PC-3 (cell line): ENCODE measurements at regions of chr14 and their contacts with region 1.

Region 1: GRCh38 chr14:37197421-37198272 is at the start of gene MIPOL1:
- DNase-seq: peak; percentile 93
- ATAC-seq: peak; percentile 72
- H3K4me3 ChIP-seq: peak within 1 kb of the TSS; percentile 83
- H3K27ac ChIP-seq: peak within 1 kb of the TSS; percentile 81
- H3K4me1 ChIP-seq: peaks cover 68% of the 10 kb centered on the region
- H3K27me3 ChIP-seq: no peaks in the 10 kb centered on the region
- CTCF ChIP-seq: peak; percentile 67
- total RNA-seq, gene MIPOL1: 14.2 and 22.5 TPM in 2 replicates

Region 2: DNA sequence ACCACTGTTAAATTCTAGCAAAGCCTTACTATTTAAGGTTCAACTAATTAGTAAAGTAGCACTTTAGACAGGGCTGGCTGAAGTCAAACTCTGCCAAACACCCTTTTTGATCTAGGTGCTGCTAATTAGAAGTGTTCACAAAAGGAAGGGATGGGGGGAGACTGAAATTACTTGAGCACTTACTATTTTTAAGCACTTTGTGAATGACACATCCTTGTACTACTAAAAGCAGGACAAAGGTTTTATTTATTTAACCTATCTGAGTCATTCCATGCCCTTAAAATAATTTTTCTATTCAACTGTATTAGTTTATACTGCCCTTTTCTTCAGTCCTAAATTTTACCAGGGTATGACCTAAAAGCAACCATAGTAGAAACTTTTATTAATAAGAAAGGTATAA is 897.3 kb before region 1 on chr14:
- CTCF ChIA-PET with region 1: no interaction called
- POLR2A ChIA-PET with region 1: no interaction called
- intact Hi-C with region 1: loop called (anchors 5 kb)
- DNase-seq: peak; percentile 46
- ATAC-seq: peak; percentile 87
- H3K4me3 ChIP-seq: no peak overlapping the region
- H3K27ac ChIP-seq: no peak overlapping the region
- H3K4me1 ChIP-seq: peaks cover 17% of the 10 kb centered on the region
- H3K27me3 ChIP-seq: no peaks in the 10 kb centered on the region
- CTCF ChIP-seq: no peak

Region 3: DNA sequence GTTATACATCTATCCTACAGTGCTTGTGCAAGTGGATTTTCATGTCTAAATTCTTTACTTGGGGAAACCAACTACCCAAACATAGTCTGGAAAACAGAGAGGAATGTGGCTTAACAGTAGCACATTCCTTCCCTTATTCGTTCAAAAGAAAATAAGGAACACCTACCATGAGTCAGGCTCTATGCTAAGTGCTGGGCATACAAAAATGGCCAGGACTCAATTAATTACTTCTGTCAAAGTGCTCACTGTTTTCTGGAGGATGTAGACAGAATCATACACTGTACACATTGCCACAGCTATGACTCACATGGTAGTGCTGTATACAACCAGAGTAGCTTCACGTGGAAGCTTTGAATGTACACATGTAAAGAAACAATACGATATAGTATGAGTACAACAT is 75.4 kb before region 1 on chr14:
- CTCF ChIA-PET with region 1: no interaction called
- POLR2A ChIA-PET with region 1: no interaction called
- intact Hi-C with region 1: loop called (anchors 2 kb)
- DNase-seq: peak; percentile 94
- ATAC-seq: peak; percentile 93
- H3K4me3 ChIP-seq: no peak overlapping the region
- H3K27ac ChIP-seq: peak overlapping the region; percentile 32
- H3K4me1 ChIP-seq: peaks cover 38% of the 10 kb centered on the region
- H3K27me3 ChIP-seq: no peaks in the 10 kb centered on the region
- CTCF ChIP-seq: no peak

Region 4: DNA sequence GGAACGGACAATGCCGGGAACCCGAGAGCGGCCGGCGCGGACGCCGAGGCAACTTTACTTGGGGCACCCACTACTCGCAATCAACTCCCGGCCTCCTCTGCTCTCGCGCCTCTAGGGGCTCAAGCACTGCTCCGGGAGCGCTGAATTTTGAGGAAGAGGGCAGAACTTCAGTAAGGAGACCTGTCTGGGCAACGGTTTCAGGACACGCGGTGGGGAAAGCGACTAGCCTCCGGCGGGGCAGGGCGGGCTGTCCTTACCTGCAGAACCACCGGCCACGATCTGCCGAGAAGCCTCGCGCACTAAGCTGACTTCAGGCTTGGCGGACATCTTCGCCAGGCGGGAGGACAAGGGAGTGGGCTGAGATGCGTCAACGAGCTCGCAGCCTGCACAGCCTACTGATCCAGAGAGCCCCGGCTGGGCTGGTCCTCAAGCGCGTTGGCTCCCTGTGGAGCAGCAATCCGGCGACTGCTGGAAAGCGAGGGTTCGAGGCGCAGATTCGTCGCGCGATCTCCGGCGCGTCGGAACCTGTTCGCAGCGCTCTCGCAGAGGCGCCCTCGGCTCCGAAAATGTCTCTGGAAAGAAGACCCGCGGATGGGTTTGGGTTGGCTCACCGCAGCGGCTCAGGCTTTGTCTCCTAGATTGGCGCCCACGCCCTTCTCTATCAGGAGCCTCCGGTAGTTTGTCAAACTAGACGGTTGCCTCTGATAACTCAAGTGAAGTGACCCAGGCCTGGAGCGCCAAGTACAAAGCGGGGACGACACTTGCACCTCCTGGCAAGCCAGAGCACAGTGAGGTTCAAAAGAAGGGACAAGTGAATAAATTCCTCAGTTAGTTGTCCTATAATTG is 25.4 kb before region 1 on chr14 and contains the start of gene SLC25A21:
- CTCF ChIA-PET with region 1: interaction called, 3 read pairs
- POLR2A ChIA-PET with region 1: interaction called, 5 read pairs
- intact Hi-C with region 1: loop called (anchors 1 kb)
- DNase-seq: peak; percentile 87
- ATAC-seq: peak; percentile 94
- H3K4me3 ChIP-seq: peak within 1 kb of the TSS; percentile 82
- H3K27ac ChIP-seq: peak within 1 kb of the TSS; percentile 87
- H3K4me1 ChIP-seq: peaks cover 15% of the 10 kb centered on the region
- H3K27me3 ChIP-seq: no peaks in the 10 kb centered on the region
- CTCF ChIP-seq: 0 out of 2 replicates have a peak, but pooled peaks have one; percentile 29
- total RNA-seq, gene SLC25A21: 0.87 and 1.0 TPM in 2 replicates

Region 5: DNA sequence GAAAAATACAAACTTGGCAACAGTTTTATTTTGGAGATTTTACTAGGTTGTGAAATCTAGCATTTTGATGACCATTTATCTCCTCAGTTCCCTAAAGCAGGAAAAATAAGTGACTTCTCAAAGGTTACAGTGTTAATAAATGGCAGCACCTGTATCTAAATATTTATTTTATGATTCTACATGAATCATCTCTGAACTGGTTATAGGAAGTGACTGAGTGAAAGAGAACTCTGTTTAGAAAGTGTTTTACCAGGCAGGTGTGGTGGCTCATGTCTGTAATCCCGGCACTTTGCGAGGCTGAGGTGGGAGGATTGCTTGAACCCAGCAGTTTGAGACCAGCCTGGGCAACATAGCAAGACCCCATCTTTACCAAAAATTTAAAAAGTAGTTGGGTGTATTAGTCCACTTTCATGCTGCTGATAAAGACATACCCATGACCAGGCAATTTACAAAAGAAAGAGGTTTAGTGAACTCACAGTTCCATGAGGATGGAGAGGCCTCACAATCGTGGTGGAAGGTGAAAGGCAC is 26.4 kb after region 1 on chr14:
- CTCF ChIA-PET with region 1: no interaction called
- POLR2A ChIA-PET with region 1: no interaction called
- intact Hi-C with region 1: loop called (anchors 2 kb)
- DNase-seq: peak; percentile 89
- ATAC-seq: peak; percentile 98
- H3K4me3 ChIP-seq: no peak overlapping the region
- H3K27ac ChIP-seq: peak overlapping the region; percentile 64
- H3K4me1 ChIP-seq: peaks cover 10% of the 10 kb centered on the region
- H3K27me3 ChIP-seq: no peaks in the 10 kb centered on the region
- CTCF ChIP-seq: no peak

Region 6: GRCh38 chr14:37588946-37589714 is 391.5 kb after region 1 on chr14:
- CTCF ChIA-PET with region 1: interaction called, 7 read pairs
- POLR2A ChIA-PET with region 1: interaction called, 15 read pairs
- intact Hi-C with region 1: no loop called
- DNase-seq: peak; percentile 54
- ATAC-seq: no peak
- H3K4me3 ChIP-seq: peak overlapping the region; percentile 96
- H3K27ac ChIP-seq: peak overlapping the region; percentile 99
- H3K4me1 ChIP-seq: peaks cover 38% of the 10 kb centered on the region
- H3K27me3 ChIP-seq: no peaks in the 10 kb centered on the region
- CTCF ChIP-seq: no peak

Region 7: DNA sequence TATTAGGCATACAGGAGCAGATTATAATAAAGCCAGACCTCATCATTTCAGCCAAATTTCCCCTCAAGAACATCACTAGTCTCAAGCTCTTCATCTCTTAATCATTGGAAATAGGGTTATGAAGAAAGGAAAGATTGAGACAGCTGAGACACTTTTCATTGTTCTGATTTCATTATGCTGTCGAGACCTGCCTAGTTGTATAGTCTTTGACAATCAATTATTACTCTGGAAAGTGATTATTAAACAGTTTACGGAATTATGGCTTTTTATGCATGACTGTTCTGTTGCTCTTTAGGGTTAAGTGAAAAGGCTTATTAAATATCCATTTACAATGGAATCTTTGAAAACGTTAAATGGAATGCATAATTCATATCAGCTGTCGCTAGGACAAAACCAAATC is 446.1 kb after region 1 on chr14:
- CTCF ChIA-PET with region 1: no interaction called
- POLR2A ChIA-PET with region 1: no interaction called
- intact Hi-C with region 1: no loop called
- DNase-seq: no peak
- ATAC-seq: no peak
- H3K4me3 ChIP-seq: no peak overlapping the region
- H3K27ac ChIP-seq: no peak overlapping the region
- H3K4me1 ChIP-seq: peaks cover 9% of the 10 kb centered on the region
- H3K27me3 ChIP-seq: no peaks in the 10 kb centered on the region
- CTCF ChIP-seq: no peak